ENCODE measurements at regions of chr3 and their contacts with region 1.

Region 1: DNA sequence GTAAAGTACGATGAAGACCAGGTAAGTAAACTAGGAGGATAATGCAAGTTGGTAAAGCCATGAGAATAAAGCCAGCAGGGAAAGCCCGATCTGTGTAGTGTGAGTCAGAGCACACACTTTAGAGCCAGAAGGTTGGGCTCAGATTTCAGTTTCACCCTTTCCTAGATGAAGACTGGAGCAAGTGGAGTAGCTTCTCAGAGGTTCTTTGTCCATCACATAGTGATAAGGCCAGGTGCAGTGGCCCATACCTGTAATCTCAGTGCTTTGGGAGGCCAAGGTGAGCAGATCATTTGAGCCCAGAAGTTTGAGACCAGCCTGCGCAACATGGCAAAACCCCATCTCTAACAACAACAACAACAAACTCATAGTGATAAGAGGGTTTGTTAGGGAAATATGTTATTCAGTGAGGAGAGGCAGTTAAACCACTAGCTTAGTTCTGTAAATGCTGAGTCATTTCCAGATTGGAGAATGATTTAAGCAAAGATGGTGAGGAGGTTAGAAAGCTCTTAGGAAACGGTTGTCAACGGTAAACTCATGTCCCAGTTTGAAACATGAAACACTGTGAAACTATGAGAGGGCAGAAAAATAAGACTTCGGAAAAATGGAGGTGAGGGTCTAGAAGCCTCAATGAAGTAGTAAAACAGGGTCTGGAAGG is 39.0 kb downstream of the IL12A start:
- DNase-seq: peak; percentile 21
- H3K4me3 Mint-ChIP-seq: peak overlapping the region; percentile 25
- H3K27ac Mint-ChIP-seq: peak overlapping the region; percentile 92
- H3K4me1 Mint-ChIP-seq: peaks cover 39% of the 10 kb centered on the region
- H3K27me3 Mint-ChIP-seq: no peaks in the 10 kb centered on the region

Region 2: DNA sequence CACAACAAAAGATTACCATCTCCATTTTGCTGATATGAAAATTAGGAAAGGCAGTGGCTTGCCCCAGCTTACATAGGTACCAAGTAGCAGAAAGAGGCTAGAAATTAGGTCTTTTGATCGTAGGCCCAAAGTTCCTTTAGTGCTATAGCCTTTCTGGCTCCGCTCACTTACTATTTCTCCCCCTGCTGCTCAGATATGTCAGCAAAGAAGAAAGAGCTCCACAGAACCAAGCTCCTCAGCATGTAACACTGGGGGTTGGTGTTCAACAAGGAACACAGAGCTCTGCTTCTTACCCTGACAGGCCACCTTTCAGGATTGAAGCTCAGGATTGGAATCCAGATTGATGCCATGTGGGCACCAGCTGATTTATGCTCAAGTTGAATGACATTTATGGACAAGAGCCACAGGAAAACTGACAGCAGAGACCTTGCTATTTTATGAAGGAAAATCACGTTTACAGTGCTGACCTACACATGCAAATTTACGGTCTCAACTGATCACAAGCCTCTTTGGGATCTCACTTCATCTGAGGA is 45.2 kb before region 1 on chr3:
- intact Hi-C with region 1: no loop called
- DNase-seq: no peak
- H3K4me3 Mint-ChIP-seq: no peak overlapping the region
- H3K27ac Mint-ChIP-seq: no peak overlapping the region
- H3K4me1 Mint-ChIP-seq: peaks cover 6% of the 10 kb centered on the region
- H3K27me3 Mint-ChIP-seq: peaks cover 42% of the 10 kb centered on the region

Region 3: DNA sequence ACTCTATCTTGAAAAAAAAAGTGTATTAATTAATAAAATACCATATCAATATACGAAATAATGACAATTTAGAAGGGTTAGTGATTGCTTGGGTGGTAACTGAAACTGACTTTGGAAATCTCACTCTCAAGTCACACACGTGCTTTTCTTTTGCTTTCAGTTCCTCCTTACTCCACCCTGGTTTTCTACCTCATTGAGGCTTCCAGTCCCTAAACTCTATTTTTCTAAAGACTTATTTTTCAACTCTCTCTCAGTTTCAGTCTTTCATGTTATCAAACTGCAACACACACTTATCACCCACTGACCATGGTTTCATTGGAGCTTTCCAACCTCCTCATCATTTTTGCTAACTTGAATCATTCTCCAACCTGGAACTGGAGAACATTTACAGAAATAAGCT is 15.6 kb before region 1 on chr3:
- intact Hi-C with region 1: loop called (anchors 1 kb)
- DNase-seq: no peak
- H3K4me3 Mint-ChIP-seq: peak overlapping the region; percentile 40
- H3K27ac Mint-ChIP-seq: peak overlapping the region; percentile 37
- H3K4me1 Mint-ChIP-seq: peaks cover 42% of the 10 kb centered on the region
- H3K27me3 Mint-ChIP-seq: no peaks in the 10 kb centered on the region

Region 4: DNA sequence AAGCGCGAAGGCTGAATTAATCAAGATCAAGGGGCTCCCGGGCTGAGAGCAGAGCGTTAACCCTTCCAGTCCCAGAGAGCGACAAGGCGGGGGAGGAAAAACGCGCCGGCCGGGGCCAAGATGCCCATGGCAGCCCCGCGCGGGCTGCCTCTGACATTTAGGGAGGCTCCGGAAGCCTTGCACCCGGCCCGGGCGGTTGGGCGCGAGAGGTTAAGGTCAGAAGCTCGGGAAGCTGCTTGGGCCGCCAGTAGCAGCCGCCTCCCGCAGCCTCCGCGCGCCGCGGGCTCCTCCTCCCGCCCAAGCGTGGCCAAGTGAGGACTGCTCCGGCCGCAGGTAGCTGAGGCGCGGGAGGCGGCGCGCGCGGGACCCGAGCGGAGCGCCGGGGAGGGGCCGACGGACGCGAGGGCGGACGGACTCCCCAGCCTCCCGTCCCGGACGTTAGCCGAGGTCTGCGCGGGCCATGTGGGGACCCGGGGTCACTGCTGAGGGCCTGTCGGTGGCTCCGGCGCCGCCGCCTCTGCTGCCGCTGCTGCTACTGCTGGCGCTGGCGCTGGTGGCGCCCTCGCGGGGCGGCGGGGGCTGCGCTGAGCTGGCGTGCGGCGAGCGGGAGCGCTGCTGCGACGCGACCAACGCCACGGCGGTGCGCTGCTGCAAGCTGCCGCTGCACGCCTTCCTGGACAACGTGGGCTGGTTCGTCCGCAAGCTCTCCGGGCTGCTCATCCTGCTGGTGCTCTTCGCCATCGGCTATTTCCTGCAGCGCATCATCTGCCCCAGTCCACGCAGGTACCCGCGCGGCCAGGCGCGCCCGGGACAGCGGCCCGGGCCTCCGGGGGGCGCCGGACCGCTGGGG is 197.7 kb after region 1 on chr3 and contains the start of gene C3orf80:
- intact Hi-C with region 1: loop called (anchors 5 kb)
- DNase-seq: peak; percentile 37
- H3K4me3 Mint-ChIP-seq: peak within 1 kb of the TSS; percentile 77
- H3K27ac Mint-ChIP-seq: peak within 1 kb of the TSS; percentile 40
- H3K4me1 Mint-ChIP-seq: peaks cover 14% of the 10 kb centered on the region
- H3K27me3 Mint-ChIP-seq: peaks cover 66% of the 10 kb centered on the region
- total RNA-seq, gene C3orf80: 0.18 and 0.42 TPM in 2 replicates

Region 5: DNA sequence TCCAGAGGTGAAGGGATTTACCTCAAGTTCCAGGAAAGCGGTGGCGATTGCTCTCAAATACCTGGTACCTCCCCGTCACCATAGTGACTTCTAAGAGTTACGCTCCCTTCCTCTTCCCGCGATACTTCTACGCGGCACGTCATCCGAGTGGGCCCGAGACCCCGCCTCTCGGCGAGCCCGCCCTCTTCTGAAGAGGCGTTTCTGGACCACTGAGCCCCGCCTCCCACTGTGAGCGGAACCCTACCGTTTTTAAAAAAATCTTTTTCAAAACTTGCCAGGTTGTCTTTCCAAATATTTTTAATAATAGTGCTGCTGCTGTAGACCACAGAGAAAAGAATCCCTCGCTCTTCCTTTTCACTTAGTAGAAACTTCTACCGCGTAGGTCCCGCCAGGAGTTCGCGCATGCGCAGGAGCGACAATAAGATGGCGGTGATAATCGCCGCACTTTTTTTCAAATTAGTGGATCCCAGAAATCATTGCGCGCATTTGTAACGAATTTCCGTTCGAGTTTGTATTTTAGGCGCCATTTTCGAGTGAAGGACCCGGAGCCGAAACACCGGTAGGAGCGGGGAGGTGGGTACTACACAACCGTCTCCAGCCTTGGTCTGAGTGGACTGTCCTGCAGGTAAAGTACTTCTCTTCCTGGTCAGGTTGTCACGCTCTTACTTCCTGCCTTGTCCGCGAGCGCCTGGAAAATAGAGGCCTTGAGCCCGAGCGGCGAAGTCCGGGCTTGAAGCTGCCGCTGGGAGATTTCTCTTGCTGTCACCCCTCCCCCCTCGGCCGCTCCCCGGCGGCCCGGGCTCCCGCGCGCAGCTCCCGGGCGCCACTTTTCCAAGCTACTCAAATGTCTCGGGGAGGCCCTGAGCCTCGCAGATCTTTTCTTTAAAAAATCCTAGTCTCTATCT is 371.7 kb after region 1 on chr3 and contains the starts of genes IFT80 and SMC4:
- intact Hi-C with region 1: loop called (anchors 1 kb)
- DNase-seq: peak; percentile 93
- H3K4me3 Mint-ChIP-seq: peak within 1 kb of the TSS; percentile 96
- H3K27ac Mint-ChIP-seq: peak within 1 kb of the TSS; percentile 98
- H3K4me1 Mint-ChIP-seq: peaks cover 57% of the 10 kb centered on the region
- H3K27me3 Mint-ChIP-seq: peaks cover 6% of the 10 kb centered on the region
- total RNA-seq, gene IFT80: 14.0 and 14.8 TPM in 2 replicates
- total RNA-seq, gene SMC4: 163 and 164 TPM in 2 replicates

Region 6: DNA sequence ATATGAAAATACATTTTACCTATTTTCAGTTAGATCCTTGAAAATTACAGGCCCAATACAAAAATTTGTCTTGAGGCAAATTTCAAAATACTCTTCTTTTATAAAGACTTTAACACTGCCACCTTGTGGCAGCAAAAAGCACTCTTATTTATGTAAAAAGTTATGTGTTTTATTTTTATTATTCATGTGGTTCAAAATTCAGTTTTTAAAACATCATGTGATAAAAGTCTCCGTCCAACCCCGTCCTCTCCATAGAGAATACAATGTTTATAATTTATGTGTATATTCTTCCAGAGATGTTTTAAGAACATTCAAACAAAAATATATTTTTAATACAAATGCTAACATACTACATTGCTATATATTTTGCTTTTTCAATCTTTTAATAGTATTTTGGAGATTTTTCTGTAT is 458.8 kb after region 1 on chr3:
- intact Hi-C with region 1: loop called (anchors 2 kb)
- DNase-seq: no peak
- H3K4me3 Mint-ChIP-seq: peak overlapping the region; percentile 78
- H3K27ac Mint-ChIP-seq: no peak overlapping the region
- H3K4me1 Mint-ChIP-seq: peaks cover 5% of the 10 kb centered on the region
- H3K27me3 Mint-ChIP-seq: peaks cover 2% of the 10 kb centered on the region

Region 7: GRCh38 chr3:160801386-160802118 is 773.9 kb after region 1 on chr3:
- intact Hi-C with region 1: loop called (anchors 5 kb)
- DNase-seq: peak; percentile 70
- H3K4me3 Mint-ChIP-seq: peak overlapping the region; percentile 64
- H3K27ac Mint-ChIP-seq: peak overlapping the region; percentile 85
- H3K4me1 Mint-ChIP-seq: peaks cover 36% of the 10 kb centered on the region
- H3K27me3 Mint-ChIP-seq: peaks cover 12% of the 10 kb centered on the region